OCI-LY7 (cell line): ENCODE measurements at regions of chrX and their contacts with region 1.

Region 1: DNA sequence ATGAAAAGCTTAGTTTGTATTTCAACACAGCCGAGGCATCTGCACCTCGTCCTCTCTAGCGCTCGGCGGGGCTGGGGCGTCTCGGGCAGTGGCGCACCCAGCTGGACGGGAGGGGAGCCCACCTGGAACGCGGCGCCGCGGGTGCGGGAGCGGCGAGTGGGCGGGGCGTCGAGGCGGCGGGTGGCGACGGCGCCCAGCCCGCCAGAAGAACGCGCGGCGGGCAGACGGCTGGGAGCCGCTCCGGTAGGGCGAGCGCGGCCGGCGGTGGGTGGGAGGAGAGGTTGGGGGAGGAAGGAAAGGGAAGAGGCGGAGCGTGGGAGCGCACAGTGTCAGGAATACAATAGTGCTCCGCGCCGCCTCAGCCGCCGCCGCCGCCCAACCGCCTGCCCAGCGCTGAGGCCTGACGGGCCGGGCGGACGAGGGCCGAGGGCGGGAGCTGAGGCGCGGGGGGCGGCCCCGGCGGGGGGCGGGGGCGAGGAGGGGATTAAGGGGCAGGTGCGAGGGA is at the start of gene JADE3:
- DNase-seq: peak; percentile 71
- H3K4me3 ChIP-seq: peak within 1 kb of the TSS; percentile 75
- H3K27ac ChIP-seq: no peak within 1 kb of the TSS
- H3K4me1 ChIP-seq: peaks cover 7% of the 10 kb centered on the region
- CTCF ChIP-seq: peak; percentile 25; the same call in 1 of the 2 replicates
- total RNA-seq, gene JADE3: 6.1 and 6.5 TPM in 2 replicates

Region 2: DNA sequence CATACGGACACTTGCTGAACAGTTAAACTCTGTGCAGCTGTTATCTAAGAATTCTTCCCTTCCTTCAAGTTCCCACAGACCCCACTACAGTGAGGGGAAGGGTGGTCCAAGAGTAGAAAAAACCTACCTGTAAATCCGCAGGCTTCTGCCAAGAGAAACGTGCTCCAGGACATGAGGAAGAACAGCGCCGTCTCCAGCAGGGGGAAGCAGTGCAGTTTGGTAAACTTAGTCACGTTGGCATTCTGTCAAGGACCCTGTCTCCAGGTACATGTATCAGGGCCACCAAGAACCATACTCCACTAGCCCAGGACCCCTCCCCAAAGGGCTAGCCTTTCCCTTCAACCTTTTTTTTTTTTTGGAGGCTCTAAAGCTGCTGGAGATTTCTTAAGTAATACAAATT is 258.7 kb before region 1 on chrX:
- CTCF ChIA-PET with region 1: no interaction called
- POLR2A ChIA-PET with region 1: no interaction called
- intact Hi-C with region 1: no loop called
- DNase-seq: peak; percentile 5
- H3K4me3 ChIP-seq: no peak overlapping the region
- H3K27ac ChIP-seq: no peak overlapping the region
- H3K4me1 ChIP-seq: peaks cover 16% of the 10 kb centered on the region
- CTCF ChIP-seq: peak; percentile 46

Region 3: GRCh38 chrX:46849933-46850332 is 62.2 kb before region 1 on chrX:
- CTCF ChIA-PET with region 1: no interaction called
- POLR2A ChIA-PET with region 1: no interaction called
- intact Hi-C with region 1: no loop called
- DNase-seq: no peak
- H3K4me3 ChIP-seq: no peak overlapping the region
- H3K27ac ChIP-seq: no peak overlapping the region
- H3K4me1 ChIP-seq: no peaks in the 10 kb centered on the region
- CTCF ChIP-seq: no peak

Region 4: GRCh38 chrX:46978341-46979291 is 66.5 kb after region 1 on chrX:
- CTCF ChIA-PET with region 1: no interaction called
- POLR2A ChIA-PET with region 1: no interaction called
- intact Hi-C with region 1: loop called (anchors 1 kb)
- DNase-seq: peak; percentile 81
- H3K4me3 ChIP-seq: no peak overlapping the region
- H3K27ac ChIP-seq: no peak overlapping the region
- H3K4me1 ChIP-seq: no peaks in the 10 kb centered on the region
- CTCF ChIP-seq: peak; percentile 82

Region 5: GRCh38 chrX:47059142-47059874 is 147.2 kb after region 1 on chrX:
- CTCF ChIA-PET with region 1: no interaction called
- POLR2A ChIA-PET with region 1: no interaction called
- intact Hi-C with region 1: no loop called
- DNase-seq: no peak
- H3K4me3 ChIP-seq: no peak overlapping the region
- H3K27ac ChIP-seq: no peak overlapping the region
- H3K4me1 ChIP-seq: no peaks in the 10 kb centered on the region
- CTCF ChIP-seq: no peak